ENCODE measurements at regions of chr15 and their contacts with region 1.

Region 1: DNA sequence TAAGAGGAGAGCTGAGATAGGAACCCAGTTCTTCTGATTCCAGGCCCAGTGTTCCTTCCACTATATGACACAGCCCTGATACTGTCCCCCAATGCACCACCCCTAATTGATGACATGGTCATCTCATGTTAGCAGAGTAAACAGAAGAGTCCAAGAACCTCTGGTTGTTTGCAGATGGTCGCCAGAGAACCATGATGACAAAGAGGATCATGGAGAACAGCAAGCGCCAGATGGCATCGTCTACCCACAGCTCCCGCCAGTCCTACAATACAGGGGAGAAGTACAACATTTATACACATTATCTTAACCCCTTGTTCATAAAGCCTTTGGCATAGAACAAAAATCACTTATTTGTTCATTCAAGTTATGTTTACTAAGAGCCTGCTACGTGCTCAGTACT is 18.5 kb upstream of the VPS39 start:
- DNase-seq: peak; percentile 78
- ATAC-seq: peak; percentile 96
- H3K4me3 ChIP-seq: no peak overlapping the region
- H3K27ac ChIP-seq: peak overlapping the region; percentile 71
- H3K4me1 ChIP-seq: peaks cover 28% of the 10 kb centered on the region
- H3K27me3 ChIP-seq: no peaks in the 10 kb centered on the region
- CTCF ChIP-seq: peak; percentile 54
- EP300 ChIP-seq: 0 out of 4 replicates have a peak, but pooled peaks of 1 of the 2 experiments have one; percentile 15
- POLR2A ChIP-seq: no peak
- RAD21 ChIP-seq: no peak

Region 2: DNA sequence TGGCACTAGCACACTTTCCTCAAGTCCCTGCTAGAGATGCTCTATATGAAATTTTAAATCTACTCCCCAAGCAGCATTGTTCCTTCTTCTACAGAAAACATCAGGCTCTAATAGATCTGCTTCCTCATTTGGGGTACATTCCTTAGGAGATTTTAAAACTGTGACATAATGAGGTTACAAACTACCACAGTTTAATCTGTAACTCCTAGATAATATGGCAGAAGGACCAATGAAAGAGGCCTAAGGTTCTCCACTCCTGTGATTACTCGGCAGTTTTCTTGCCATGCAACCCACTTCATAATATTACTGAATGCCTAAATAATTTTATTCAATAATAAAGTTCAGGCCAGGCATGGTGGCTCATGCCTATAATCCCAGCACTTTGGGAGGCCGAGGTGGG is 248.2 kb after region 1 on chr15:
- CTCF ChIA-PET with region 1: no interaction called
- POLR2A ChIA-PET with region 1: no interaction called
- in situ Hi-C with region 1: no loop called
- intact Hi-C with region 1: loop called (anchors 10 kb)
- DNase-seq: no peak
- ATAC-seq: no peak
- H3K4me3 ChIP-seq: no peak overlapping the region
- H3K27ac ChIP-seq: no peak overlapping the region
- H3K4me1 ChIP-seq: no peaks in the 10 kb centered on the region
- H3K27me3 ChIP-seq: no peaks in the 10 kb centered on the region
- CTCF ChIP-seq: no peak
- EP300 ChIP-seq: no peak
- POLR2A ChIP-seq: no peak
- RAD21 ChIP-seq: no peak